SK-N-SH (cell line): ENCODE measurements at regions of chr2 and their contacts with region 1.

Region 1: DNA sequence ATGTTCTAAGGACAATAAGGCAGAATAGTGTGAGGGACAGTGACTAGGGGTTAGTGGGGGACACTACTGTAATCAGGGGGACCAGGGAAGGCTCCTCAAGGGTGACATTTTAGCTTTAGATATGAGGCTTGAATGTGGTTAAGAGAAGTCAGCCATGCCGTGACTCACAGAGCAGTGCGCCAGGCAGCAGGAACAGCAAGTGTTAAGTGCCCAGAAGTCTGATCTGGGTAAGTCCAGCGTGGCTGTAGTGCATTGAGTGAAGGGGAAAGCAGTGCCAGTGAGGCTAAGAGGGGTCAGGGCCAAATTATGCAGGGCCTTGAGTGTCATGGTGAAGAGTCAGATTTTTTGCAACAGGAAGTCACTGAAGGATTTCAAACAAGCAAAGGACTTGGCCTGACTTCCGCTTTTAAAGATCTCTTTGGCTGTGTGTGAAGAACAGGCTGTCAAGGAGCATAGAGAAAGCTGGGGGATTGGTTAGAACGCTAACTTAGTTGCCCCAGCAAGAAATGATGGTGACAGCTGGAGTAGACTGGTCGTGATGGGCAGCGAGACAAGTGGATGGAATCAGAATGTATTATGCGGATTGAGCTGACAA is 151.5 kb downstream of the MSH2 start:
- DNase-seq: no peak
- H3K4me3 ChIP-seq: no peak overlapping the region; a peak in 1 of 4 replicates
- H3K27ac ChIP-seq: no peak overlapping the region
- H3K4me1 ChIP-seq: no peaks in the 10 kb centered on the region
- H3K27me3 ChIP-seq: no peaks in the 10 kb centered on the region; the same call in 1 of the 2 replicates
- CTCF ChIP-seq: no peak
- EP300 ChIP-seq: no peak
- RAD21 ChIP-seq: no peak

Region 2: GRCh38 chr2:47541848-47542450 is 12.5 kb before region 1 on chr2:
- CTCF ChIA-PET with region 1: interaction called, 10 read pairs
- POLR2A ChIA-PET with region 1: no interaction called
- DNase-seq: no peak
- H3K4me3 ChIP-seq: no peak overlapping the region
- H3K27ac ChIP-seq: no peak overlapping the region
- H3K4me1 ChIP-seq: no peaks in the 10 kb centered on the region
- H3K27me3 ChIP-seq: peaks cover 12% of the 10 kb centered on the region; the same call in 1 of the 2 replicates
- CTCF ChIP-seq: no peak
- EP300 ChIP-seq: no peak
- RAD21 ChIP-seq: no peak